PC-9 (cell line): ENCODE measurements at regions of chr15 and their contacts with region 1.

Region 1: GRCh38 chr15:60932051-60932915 is 296.8 kb downstream of the RORA start:
- DNase-seq: peak; percentile 85 to 93
- H3K4me3 ChIP-seq: no peak overlapping the region; the same call in 1 of the 2 replicates
- H3K27ac ChIP-seq: peak overlapping the region; percentile 62
- H3K4me1 ChIP-seq: peaks cover 21% of the 10 kb centered on the region
- H3K27me3 ChIP-seq: no peaks in the 10 kb centered on the region
- CTCF ChIP-seq: peak; percentile 64

Region 2: GRCh38 chr15:60374628-60375081 is 557.6 kb before region 1 on chr15:
- CTCF ChIA-PET with region 1: no interaction called
- POLR2A ChIA-PET with region 1: interaction called, 10 read pairs
- intact Hi-C with region 1: no loop called
- DNase-seq: peak; percentile 90 to 93
- H3K4me3 ChIP-seq: no peak overlapping the region
- H3K27ac ChIP-seq: peak overlapping the region; percentile 97
- H3K4me1 ChIP-seq: peaks cover 56% of the 10 kb centered on the region
- H3K27me3 ChIP-seq: no peaks in the 10 kb centered on the region
- CTCF ChIP-seq: no peak

Region 3: DNA sequence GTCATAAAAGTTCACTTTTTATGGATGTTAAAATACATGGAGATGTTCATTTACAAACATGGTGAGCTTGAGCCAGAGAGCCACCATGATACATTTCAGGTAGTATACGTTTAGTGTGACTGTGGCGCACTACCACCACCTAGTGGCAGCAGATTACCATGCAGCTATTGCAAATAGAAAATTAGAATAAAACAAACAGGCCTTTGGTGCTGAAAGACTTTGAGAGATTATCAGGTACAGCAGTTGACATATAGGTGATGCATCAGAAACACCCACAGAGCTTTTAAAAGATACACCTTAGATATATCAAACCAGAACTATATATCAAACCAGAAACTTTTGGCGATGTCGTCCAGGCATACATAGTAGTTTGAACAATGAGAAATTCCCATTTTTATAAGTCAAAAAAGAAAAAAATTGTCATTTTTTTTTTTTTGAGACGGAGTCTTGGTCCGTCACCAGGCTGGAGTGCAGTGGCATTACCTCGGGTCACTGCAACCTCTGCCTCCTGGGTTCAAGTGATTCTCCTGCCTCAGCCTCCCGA is 411.4 kb before region 1 on chr15:
- CTCF ChIA-PET with region 1: interaction called, 9 read pairs
- POLR2A ChIA-PET with region 1: no interaction called
- intact Hi-C with region 1: loop called (anchors 2 kb)
- DNase-seq: peak; percentile 36 to 68
- H3K4me3 ChIP-seq: no peak overlapping the region
- H3K27ac ChIP-seq: peak overlapping the region; percentile 92
- H3K4me1 ChIP-seq: peaks cover 33% of the 10 kb centered on the region
- H3K27me3 ChIP-seq: no peaks in the 10 kb centered on the region
- CTCF ChIP-seq: peak; percentile 88

Region 4: GRCh38 chr15:60819360-60819759 is 112.9 kb before region 1 on chr15:
- CTCF ChIA-PET with region 1: no interaction called
- POLR2A ChIA-PET with region 1: interaction called, 17 read pairs
- intact Hi-C with region 1: no loop called
- DNase-seq: no peak
- H3K4me3 ChIP-seq: no peak overlapping the region
- H3K27ac ChIP-seq: no peak overlapping the region
- H3K4me1 ChIP-seq: no peaks in the 10 kb centered on the region
- H3K27me3 ChIP-seq: no peaks in the 10 kb centered on the region
- CTCF ChIP-seq: no peak

Region 5: GRCh38 chr15:61051569-61052031 is 119.3 kb after region 1 on chr15:
- CTCF ChIA-PET with region 1: no interaction called
- POLR2A ChIA-PET with region 1: no interaction called
- intact Hi-C with region 1: loop called (anchors 1 kb)
- DNase-seq: peak in 1 of 2 experiments; percentile 29
- H3K4me3 ChIP-seq: no peak overlapping the region
- H3K27ac ChIP-seq: no peak overlapping the region
- H3K4me1 ChIP-seq: no peaks in the 10 kb centered on the region
- H3K27me3 ChIP-seq: no peaks in the 10 kb centered on the region
- CTCF ChIP-seq: peak; percentile 64